Mammary epithelial cell (primary cell): ENCODE measurements at regions of chr18 and their contacts with region 1.

Region 1: GRCh38 chr18:63439334-63439733 is 17.1 kb upstream of the VPS4B start:
- DNase-seq: peak; percentile 64
- H3K4me3 ChIP-seq: no peak overlapping the region
- H3K27ac ChIP-seq: peak overlapping the region; percentile 63
- H3K4me1 ChIP-seq: peaks cover 44% of the 10 kb centered on the region
- H3K27me3 ChIP-seq: no peaks in the 10 kb centered on the region
- CTCF ChIP-seq: peak; percentile 86 to 92

Region 2: DNA sequence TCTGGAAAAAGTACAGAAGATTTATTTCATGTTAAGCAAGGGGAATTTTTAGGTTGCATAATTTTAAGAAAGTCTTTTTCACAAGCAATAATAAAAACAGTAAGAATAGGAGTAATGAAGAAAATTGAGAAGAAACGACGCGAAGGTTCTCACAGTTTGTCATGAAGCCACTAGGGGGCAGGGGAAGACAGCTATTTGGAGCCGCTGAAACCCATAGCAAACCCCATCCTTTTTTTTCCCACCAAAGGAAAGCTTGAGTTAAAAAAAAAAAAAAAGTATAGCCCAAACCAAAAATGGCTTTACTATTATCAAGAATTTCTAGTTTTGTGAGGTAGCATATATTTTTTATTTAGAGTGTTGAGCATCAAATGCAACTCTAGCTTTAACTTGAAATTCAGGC is 423.1 kb before region 1 on chr18:
- CTCF ChIA-PET with region 1: no interaction called
- dilution Hi-C with region 1: no loop called
- in situ Hi-C with region 1: loop called in 1 of 2 experiments (anchors 25 kb)
- intact Hi-C with region 1: loop called (anchors 1 kb)
- DNase-seq: peak; percentile 19
- H3K4me3 ChIP-seq: no peak overlapping the region
- H3K27ac ChIP-seq: no peak overlapping the region
- H3K4me1 ChIP-seq: no peaks in the 10 kb centered on the region
- H3K27me3 ChIP-seq: peaks cover 2% of the 10 kb centered on the region
- CTCF ChIP-seq: peak; percentile 78 to 80

Region 3: GRCh38 chr18:63131106-63131958 is 308.0 kb before region 1 on chr18:
- CTCF ChIA-PET with region 1: no interaction called
- dilution Hi-C with region 1: no loop called
- in situ Hi-C with region 1: loop called (anchors 25 kb)
- intact Hi-C with region 1: loop called (anchors 1 kb)
- DNase-seq: peak; percentile 32
- H3K4me3 ChIP-seq: no peak overlapping the region
- H3K27ac ChIP-seq: no peak overlapping the region
- H3K4me1 ChIP-seq: no peaks in the 10 kb centered on the region
- H3K27me3 ChIP-seq: no peaks in the 10 kb centered on the region
- CTCF ChIP-seq: peak; percentile 40 to 69

Region 4: DNA sequence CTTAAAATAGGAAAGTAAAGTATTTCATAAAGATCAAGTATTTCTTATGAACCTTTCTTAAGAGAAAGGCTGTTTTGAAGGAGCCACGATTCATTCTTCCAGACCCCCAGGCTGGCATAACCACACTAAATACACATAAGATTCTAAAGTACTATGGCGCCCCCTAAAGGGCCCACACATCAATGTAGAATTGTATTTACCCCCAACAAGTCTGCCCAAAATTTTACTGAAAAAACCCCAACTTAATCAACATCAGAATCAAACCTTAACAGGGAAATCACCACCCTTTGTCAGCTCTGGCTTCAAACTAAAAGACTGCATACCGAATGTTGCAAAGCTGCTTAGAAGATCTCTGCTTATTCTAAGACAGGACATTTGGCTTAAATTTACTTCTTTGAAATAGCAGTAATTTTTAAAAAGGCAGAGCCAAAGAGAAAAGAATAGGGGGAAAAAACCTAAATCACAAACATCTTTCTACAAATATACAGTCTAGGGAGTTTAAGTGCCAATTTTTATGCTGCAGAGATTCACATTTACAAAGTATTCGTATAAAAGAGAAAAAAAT is 99.3 kb before region 1 on chr18:
- CTCF ChIA-PET with region 1: interaction called, 4 read pairs
- dilution Hi-C with region 1: no loop called
- in situ Hi-C with region 1: no loop called
- intact Hi-C with region 1: loop called (anchors 1 kb)
- DNase-seq: no peak
- H3K4me3 ChIP-seq: no peak overlapping the region
- H3K27ac ChIP-seq: no peak overlapping the region
- H3K4me1 ChIP-seq: peaks cover 16% of the 10 kb centered on the region
- H3K27me3 ChIP-seq: no peaks in the 10 kb centered on the region
- CTCF ChIP-seq: peak; percentile 48 to 53

Region 5: DNA sequence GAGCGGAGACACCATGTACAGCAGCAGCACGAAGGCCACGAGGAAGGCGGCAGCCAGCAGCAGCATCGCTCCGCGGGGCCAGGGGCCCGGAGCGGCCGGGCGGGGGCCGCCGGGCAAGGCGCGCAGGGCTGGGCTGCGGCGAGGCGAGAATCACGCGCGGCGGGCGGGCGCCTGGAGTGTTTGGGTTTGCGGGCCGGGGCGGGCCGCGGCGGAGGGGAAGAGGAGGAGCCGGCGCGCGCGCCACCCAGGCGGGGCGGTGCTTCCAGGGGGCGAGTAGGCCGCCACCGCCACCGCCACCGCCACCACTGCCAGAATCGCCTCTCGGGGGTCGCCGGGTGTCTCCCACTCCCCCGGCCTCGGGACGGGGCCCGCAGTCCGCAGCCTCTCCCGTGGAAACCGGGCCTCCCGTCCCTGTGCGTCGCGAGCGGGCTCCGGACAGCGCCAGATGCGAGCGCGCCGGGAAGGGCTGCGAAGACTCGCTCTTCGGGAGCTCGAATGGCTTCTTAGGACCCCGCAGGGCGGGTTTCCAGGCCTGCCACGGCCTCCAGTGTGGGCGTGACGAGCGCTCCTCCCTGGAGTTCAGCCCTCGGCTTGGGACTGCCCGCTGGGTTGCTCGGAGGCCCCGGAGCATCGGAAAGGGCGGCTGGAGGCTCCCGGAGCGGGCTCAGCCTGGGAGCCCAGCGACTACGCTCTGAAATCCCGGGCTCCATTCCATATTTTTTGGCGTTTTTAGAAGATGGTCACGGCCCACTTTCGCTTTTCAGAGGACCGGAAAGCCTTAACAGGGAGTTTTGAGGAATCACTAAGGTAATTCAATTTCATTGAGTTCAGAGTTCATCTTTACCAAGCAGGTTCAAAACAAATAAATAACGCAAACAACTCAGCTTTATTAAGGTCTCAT is 72.0 kb before region 1 on chr18 and contains the start of gene KDSR:
- CTCF ChIA-PET with region 1: no interaction called
- dilution Hi-C with region 1: no loop called
- in situ Hi-C with region 1: no loop called
- intact Hi-C with region 1: loop called (anchors 1 kb)
- DNase-seq: peak; percentile 99
- H3K4me3 ChIP-seq: peak within 1 kb of the TSS; percentile 72 to 92 (median 87)
- H3K27ac ChIP-seq: peak within 1 kb of the TSS; percentile 81
- H3K4me1 ChIP-seq: peaks cover 15% of the 10 kb centered on the region
- H3K27me3 ChIP-seq: no peaks in the 10 kb centered on the region
- CTCF ChIP-seq: no peak
- total RNA-seq, gene KDSR: 65.7 to 101 TPM

Region 6: GRCh38 chr18:63505566-63506335 is 66.4 kb after region 1 on chr18:
- CTCF ChIA-PET with region 1: interaction called, 23 read pairs
- dilution Hi-C with region 1: no loop called
- in situ Hi-C with region 1: no loop called
- intact Hi-C with region 1: no loop called
- DNase-seq: peak; percentile 72
- H3K4me3 ChIP-seq: no peak overlapping the region
- H3K27ac ChIP-seq: no peak overlapping the region
- H3K4me1 ChIP-seq: no peaks in the 10 kb centered on the region
- H3K27me3 ChIP-seq: no peaks in the 10 kb centered on the region
- CTCF ChIP-seq: peak; percentile 60 to 79

Region 7: GRCh38 chr18:63578357-63578958 is 139.1 kb after region 1 on chr18:
- CTCF ChIA-PET with region 1: no interaction called
- dilution Hi-C with region 1: no loop called
- in situ Hi-C with region 1: no loop called
- intact Hi-C with region 1: no loop called
- DNase-seq: no peak
- H3K4me3 ChIP-seq: no peak overlapping the region
- H3K27ac ChIP-seq: no peak overlapping the region
- H3K4me1 ChIP-seq: no peaks in the 10 kb centered on the region
- H3K27me3 ChIP-seq: no peaks in the 10 kb centered on the region
- CTCF ChIP-seq: peak; percentile 77 to 83